ENCODE measurements at regions of chr19 and their contacts with region 1.

Region 1: DNA sequence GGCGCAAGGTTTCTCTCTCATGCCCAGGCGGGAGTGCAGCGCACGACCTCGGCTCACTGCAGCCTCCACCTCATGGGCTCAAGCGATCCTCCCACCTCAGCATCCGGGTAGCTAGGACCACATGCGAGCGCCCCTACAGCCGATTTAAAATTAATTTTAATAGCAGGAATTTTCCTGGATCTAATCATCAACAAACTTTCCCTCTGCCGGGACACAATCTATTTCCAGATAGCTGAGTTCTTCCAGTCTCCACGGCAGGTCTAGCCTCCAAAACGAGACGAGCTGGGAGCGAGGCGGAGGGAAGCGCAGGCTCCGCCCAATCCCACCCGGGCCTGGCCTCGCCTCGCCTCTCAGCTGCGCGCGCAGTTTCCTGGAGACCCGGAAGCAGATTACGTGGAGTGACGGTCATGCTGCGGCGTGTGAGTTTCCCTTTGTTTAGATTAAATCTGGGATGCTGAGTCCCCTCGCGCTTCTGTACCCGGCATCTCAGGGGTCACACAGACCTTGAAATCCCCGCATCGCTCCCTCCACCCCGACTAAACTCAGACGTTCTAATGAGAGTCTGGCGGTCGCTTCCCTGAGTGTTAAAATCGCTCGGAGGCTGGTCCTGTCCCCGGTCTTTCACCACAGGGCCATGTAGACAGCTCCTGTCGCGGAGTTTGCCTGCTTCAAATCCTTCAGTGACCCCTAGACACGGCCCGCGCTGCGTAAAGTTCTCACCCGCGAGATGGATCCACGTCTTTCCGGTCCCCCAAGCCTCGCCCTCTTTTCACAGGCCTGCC is at the start of gene ZNF880:
- DNase-seq: peak; percentile 80
- H3K4me3 Mint-ChIP-seq: peak within 1 kb of the TSS; percentile 89
- H3K27ac Mint-ChIP-seq: peak within 1 kb of the TSS; percentile 91
- H3K4me1 Mint-ChIP-seq: peaks cover 6% of the 10 kb centered on the region
- H3K27me3 Mint-ChIP-seq: no peaks in the 10 kb centered on the region
- total RNA-seq, gene ZNF880: 5.4 and 12.5 TPM in 2 replicates

Region 2: DNA sequence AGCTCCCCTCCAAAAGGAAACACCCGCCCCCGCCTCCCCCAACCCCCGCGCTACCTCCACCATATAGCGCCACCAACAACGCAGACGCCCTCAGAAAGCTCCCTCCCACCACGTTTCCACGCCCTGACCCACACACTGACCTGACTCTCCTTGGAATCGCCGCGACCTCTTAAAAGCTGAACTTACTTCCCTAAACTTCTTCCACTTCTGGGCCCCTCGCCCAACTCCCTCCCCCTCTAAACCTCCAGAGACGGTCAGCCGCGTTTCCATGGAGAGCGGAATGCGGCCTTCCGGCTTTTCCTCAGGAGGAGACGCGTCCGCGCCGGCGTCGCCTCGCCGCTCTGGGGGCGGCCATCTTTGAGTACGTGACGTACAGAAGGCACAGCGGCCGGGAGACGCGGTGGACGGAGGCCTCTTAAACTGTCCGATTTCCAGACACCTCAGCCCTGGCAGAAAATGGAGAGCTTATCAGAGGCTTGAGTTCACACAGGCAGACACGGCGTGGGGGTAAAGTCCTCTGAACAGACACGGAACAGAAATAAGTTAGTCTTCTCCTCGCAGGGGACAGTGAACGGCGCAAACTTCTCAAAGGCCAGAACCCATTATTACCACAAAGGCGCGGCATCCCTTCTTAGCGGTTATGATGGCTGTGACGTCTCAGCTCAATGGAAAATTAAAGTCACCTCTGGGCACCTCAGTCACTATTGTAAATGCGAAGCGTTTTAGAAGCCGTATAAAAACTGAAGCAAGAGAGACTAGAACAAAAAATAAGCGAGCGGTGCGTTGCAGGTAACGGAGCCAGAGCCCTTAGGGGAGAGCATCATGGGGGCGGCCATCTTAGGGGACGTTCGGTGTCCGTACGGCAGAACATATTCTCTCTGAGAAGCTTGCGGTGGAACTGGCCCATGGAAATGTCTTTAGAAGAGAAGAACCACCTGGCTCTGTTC is 320.9 kb before region 1 on chr19 and contains the start of gene ZNF432:
- intact Hi-C with region 1: no loop called
- DNase-seq: peak; percentile 76
- H3K4me3 Mint-ChIP-seq: peak within 1 kb of the TSS; percentile 95
- H3K27ac Mint-ChIP-seq: peak within 1 kb of the TSS; percentile 99
- H3K4me1 Mint-ChIP-seq: peaks cover 20% of the 10 kb centered on the region
- H3K27me3 Mint-ChIP-seq: no peaks in the 10 kb centered on the region
- total RNA-seq, gene ZNF432: 12.5 and 15.0 TPM in 2 replicates

Region 3: GRCh38 chr19:52336117-52336790 is 33.5 kb before region 1 on chr19 and contains the start of gene ZNF610:
- intact Hi-C with region 1: loop called (anchors 2 kb)
- DNase-seq: peak; percentile 77
- H3K4me3 Mint-ChIP-seq: peak within 1 kb of the TSS; percentile 88
- H3K27ac Mint-ChIP-seq: peak within 1 kb of the TSS; percentile 91
- H3K4me1 Mint-ChIP-seq: peaks cover 5% of the 10 kb centered on the region
- H3K27me3 Mint-ChIP-seq: no peaks in the 10 kb centered on the region
- total RNA-seq, gene ZNF610: 0.29 and 0.36 TPM in 2 replicates